ENCODE measurements at regions of chr17 and their contacts with region 1.

Region 1: DNA sequence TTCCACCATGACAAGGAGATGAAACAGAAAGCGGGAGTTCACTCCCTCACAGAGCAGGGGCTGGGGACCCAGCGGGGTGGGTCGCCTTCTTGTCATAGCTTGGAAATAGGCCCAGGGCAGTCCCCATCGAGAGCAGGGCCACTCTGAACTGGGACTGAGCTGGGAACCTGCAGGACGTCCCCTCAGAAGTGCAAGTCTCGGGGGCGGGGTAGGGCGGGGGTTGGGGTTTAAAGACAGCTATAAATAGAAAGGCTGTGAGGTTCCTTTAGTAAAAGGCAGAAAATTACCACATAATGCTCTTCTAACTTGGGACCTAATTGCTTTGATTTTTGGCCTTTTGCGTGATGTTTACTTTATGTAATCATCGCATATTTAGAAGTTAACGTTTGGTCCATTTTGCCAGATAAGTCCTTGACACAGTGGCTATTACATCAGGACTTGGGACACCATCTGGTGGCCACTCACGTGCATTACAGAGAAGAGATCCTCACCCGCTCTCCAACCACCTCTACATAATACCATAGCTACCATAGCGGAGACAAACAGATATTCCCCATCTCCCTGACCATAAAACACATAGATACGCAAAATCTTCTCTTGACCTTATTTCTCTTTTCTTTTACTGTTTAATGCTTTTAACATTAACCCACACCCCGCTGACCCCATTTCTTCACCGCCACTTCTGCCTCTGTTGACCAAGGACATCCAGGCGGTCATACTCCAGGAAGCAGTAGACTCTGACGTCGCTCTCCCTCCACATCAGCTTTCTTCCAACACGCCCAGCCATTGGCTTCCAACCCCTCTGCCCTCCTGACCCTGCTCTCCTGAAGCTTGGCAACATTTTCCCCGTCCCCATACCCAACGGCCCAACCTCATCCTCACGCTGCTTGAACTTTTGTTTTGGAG is 27.5 kb upstream of the PIK3R6 start:
- DNase-seq: no peak
- H3K4me3 Mint-ChIP-seq: peak overlapping the region; percentile 52
- H3K27ac Mint-ChIP-seq: peak overlapping the region; percentile 72
- H3K4me1 Mint-ChIP-seq: peaks cover 72% of the 10 kb centered on the region
- H3K27me3 Mint-ChIP-seq: no peaks in the 10 kb centered on the region

Region 2: DNA sequence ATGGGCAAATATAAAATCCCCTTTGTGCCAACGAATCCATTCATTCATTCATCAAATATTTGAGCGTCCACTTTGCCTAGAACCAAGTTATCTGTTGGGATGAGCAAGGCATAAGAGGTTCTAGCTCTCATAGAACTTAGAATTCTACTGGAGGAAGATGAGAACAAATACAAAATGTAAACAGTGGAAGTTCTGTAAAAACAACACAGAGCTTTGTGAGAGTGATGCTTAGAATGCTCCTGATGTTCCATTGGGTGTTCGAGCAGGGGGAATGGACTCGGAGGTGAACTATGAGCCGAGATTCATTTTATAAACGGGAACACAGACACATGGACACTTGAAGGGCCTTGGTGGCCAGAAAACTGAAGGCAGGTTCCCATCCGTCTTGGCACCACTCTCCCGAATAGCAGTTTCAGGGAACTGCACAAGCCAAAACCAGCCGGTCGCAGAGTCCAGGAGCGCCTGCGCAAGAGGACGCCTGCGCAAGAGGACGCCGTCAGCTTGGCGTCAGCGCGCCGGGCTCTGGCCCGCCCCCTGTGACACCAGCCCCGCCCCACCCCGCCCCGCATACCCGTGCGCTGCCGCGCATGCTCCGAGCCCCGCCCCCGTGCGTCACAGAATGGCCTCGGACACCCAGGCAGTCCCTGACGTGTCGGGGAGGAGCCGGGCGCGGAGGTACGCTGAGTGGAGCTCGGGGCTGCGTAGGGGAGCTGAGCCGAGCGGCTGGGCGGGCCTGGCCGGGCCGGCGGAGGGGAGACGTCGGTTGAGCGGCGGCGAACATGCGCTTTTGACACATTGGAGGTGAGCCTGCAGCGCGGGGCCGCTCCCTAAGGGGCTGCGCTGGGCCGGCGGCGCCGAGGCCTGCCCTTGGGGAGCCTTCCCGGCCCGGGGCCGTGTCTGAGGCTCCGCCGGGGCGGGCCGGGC is 459.4 kb before region 1 on chr17 and contains the start of gene NDEL1:
- intact Hi-C with region 1: loop called (anchors 5 kb)
- DNase-seq: peak; percentile 98
- H3K4me3 Mint-ChIP-seq: peak within 1 kb of the TSS; percentile 88
- H3K27ac Mint-ChIP-seq: peak within 1 kb of the TSS; percentile 92
- H3K4me1 Mint-ChIP-seq: peaks cover 14% of the 10 kb centered on the region
- H3K27me3 Mint-ChIP-seq: no peaks in the 10 kb centered on the region
- total RNA-seq, gene NDEL1: 72.4 and 75.4 TPM in 2 replicates

Region 3: GRCh38 chr17:8785547-8786413 is 109.1 kb before region 1 on chr17:
- intact Hi-C with region 1: loop called (anchors 5 kb)
- DNase-seq: peak; percentile 19
- H3K4me3 Mint-ChIP-seq: no peak overlapping the region
- H3K27ac Mint-ChIP-seq: no peak overlapping the region
- H3K4me1 Mint-ChIP-seq: no peaks in the 10 kb centered on the region
- H3K27me3 Mint-ChIP-seq: peaks cover 9% of the 10 kb centered on the region

Region 4: GRCh38 chr17:8935191-8935590 is 40.3 kb after region 1 on chr17:
- intact Hi-C with region 1: loop called (anchors 1 kb)
- DNase-seq: no peak
- H3K4me3 Mint-ChIP-seq: peak overlapping the region; percentile 68
- H3K27ac Mint-ChIP-seq: peak overlapping the region; percentile 93
- H3K4me1 Mint-ChIP-seq: peaks cover 59% of the 10 kb centered on the region
- H3K27me3 Mint-ChIP-seq: no peaks in the 10 kb centered on the region

Region 5: GRCh38 chr17:8955021-8955959 is 60.4 kb after region 1 on chr17:
- intact Hi-C with region 1: loop called (anchors 1 kb)
- DNase-seq: no peak
- H3K4me3 Mint-ChIP-seq: peak overlapping the region; percentile 73
- H3K27ac Mint-ChIP-seq: peak overlapping the region; percentile 89
- H3K4me1 Mint-ChIP-seq: peaks cover 96% of the 10 kb centered on the region
- H3K27me3 Mint-ChIP-seq: no peaks in the 10 kb centered on the region

Region 6: GRCh38 chr17:8997994-8998628 is 103.2 kb after region 1 on chr17:
- intact Hi-C with region 1: loop called (anchors 2 kb)
- DNase-seq: peak; percentile 67
- H3K4me3 Mint-ChIP-seq: no peak overlapping the region
- H3K27ac Mint-ChIP-seq: no peak overlapping the region
- H3K4me1 Mint-ChIP-seq: no peaks in the 10 kb centered on the region
- H3K27me3 Mint-ChIP-seq: peaks cover 35% of the 10 kb centered on the region

Measured in activated T-helper 1 cell treated with anti-CD3 and anti-CD28 coated beads, Interleukin-12 subunit alpha, Interleukin-12 subunit beta, Interleukin-2, Interleukin-4 antibody, amounts not matched to agents 30 ng/mL and 10 ng/mL and 1 ng/mL, durations not matched to agents 14 hours and 24 hours and 36 hours (primary cell).